B cell (primary cell): ENCODE measurements at regions of chr11 and their contacts with region 1.

Region 1: DNA sequence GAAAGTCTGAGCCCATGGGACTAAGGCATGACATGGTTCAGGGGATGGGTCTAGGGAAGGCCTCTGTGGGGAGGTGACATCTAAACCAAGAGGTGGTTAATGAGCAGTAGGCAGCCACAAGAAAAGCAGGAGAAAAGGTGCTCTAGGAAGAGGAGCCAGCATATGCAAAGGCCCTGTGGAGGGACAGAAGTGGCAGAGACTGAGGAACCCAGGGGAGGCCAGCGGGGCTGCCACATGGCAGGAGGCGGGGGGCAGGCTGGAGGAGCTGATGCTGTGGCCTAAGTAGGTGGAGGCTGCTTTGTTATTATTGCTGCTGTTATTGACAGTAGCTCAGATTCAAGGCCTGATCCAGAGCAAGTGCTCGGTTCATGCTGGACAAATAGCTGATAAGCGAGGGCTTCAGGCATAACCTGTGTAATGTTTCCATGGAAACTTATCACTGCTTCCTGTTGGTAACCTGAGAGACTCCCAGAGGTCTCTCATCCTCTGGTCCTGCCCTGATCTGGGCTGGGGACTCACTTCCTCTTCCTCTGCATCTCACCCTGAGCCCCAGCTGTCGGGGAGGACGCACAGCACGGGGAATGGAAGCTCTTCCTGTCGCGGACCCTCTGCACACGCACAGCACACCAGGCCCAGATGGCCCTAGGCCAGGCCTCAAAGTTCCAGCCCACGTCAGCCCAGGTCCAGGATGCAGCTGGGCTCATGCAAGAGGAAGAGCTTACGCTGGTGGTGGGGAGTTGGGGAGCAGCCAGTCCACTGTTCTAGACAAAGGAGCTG is 75.2 kb upstream of the TP53I11 start:
- DNase-seq: peak; percentile 82
- ATAC-seq: peak; percentile 50
- H3K4me3 ChIP-seq: no peak overlapping the region
- H3K4me3 Mint-ChIP-seq: peak overlapping the region; percentile 51
- H3K27ac ChIP-seq: peak overlapping the region; percentile 72 to 79
- H3K27ac Mint-ChIP-seq: peak overlapping the region; percentile 96
- H3K4me1 ChIP-seq: peaks cover 46 to 58% of the 10 kb centered on the region in 2 donors
- H3K4me1 Mint-ChIP-seq: peaks cover 66% of the 10 kb centered on the region
- H3K27me3 ChIP-seq: peaks cover 0 to 2% (median 0%) of the 10 kb centered on the region in 4 experiments
- H3K27me3 Mint-ChIP-seq: no peaks in the 10 kb centered on the region
- CTCF ChIP-seq: no peak

Region 2: DNA sequence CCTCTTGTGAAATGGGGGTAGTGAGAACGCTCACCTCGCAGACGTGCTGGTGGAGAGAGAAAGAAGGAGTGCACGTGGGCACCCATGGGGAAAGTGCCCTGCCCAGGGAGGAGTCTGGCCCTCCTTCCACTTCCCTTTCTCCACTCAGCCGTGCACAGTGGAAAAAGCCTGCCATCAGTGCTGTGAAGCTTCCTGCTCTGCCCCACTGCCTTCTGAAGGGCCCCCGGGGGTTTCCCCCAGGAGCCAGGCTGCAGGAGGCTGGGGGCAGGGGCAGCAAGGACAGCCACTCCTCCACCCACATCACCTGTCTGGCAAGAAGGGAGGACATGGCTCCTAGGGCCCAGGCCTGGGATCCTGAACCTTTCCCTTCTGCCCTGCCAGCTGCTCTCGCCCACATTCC is 82.8 kb before region 1 on chr11:
- CTCF ChIA-PET with region 1: interaction called, 13 read pairs
- POLR2A ChIA-PET with region 1: interaction called, 16 read pairs
- intact Hi-C with region 1: loop called (anchors 1 kb)
- DNase-seq: peak; percentile 89
- ATAC-seq: peak; percentile 93
- H3K4me3 ChIP-seq: peak overlapping the region in 4 of 5 experiments; percentile 10 to 53 (median 26)
- H3K4me3 Mint-ChIP-seq: peak overlapping the region; percentile 90
- H3K27ac ChIP-seq: peak overlapping the region; percentile 38 to 67
- H3K27ac Mint-ChIP-seq: peak overlapping the region; percentile 95
- H3K4me1 ChIP-seq: peaks cover 57 to 74% of the 10 kb centered on the region in 2 donors
- H3K4me1 Mint-ChIP-seq: peaks cover 92% of the 10 kb centered on the region
- H3K27me3 ChIP-seq: no peaks in the 10 kb centered on the region
- H3K27me3 Mint-ChIP-seq: no peaks in the 10 kb centered on the region
- CTCF ChIP-seq: no peak

Region 3: GRCh38 chr11:45079943-45080719 is 54.2 kb after region 1 on chr11:
- CTCF ChIA-PET with region 1: interaction called, 22 read pairs
- POLR2A ChIA-PET with region 1: interaction called, 10 read pairs
- intact Hi-C with region 1: loop called (anchors 1 kb)
- DNase-seq: peak; percentile 78
- ATAC-seq: peak; percentile 59
- H3K4me3 ChIP-seq: peak overlapping the region in 2 of 5 experiments; percentile 5 to 6
- H3K4me3 Mint-ChIP-seq: peak overlapping the region; percentile 71
- H3K27ac ChIP-seq: peak overlapping the region; percentile 65 to 73
- H3K27ac Mint-ChIP-seq: peak overlapping the region; percentile 93
- H3K4me1 ChIP-seq: peaks cover 52 to 65% of the 10 kb centered on the region in 2 donors
- H3K4me1 Mint-ChIP-seq: peaks cover 74% of the 10 kb centered on the region
- H3K27me3 ChIP-seq: no peaks in the 10 kb centered on the region
- H3K27me3 Mint-ChIP-seq: no peaks in the 10 kb centered on the region
- CTCF ChIP-seq: no peak

Region 4: DNA sequence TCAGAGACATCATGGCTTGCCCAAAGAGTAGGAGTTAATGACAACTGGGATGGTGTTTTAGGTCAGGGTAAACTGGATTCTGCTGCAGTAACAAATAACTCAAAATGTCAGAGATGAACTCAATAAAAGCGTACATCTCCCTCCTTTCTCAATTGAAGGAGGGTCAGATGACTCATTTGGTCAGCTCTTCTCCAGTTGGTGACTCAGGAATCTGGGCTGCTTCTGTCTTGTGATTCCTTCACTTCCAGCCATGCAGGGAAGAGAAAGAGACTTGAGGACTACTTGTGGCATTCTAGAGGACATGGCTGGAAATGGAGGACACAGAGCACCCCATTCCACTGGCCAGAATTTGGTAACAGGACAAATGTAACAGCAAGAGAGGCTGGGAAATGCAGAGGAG is 263.5 kb after region 1 on chr11:
- CTCF ChIA-PET with region 1: no interaction called
- POLR2A ChIA-PET with region 1: no interaction called
- intact Hi-C with region 1: no loop called
- DNase-seq: no peak
- ATAC-seq: no peak
- H3K4me3 ChIP-seq: no peak overlapping the region
- H3K4me3 Mint-ChIP-seq: no peak overlapping the region
- H3K27ac ChIP-seq: no peak overlapping the region
- H3K27ac Mint-ChIP-seq: no peak overlapping the region
- H3K4me1 ChIP-seq: no peaks in the 10 kb centered on the region
- H3K4me1 Mint-ChIP-seq: no peaks in the 10 kb centered on the region
- H3K27me3 ChIP-seq: peaks cover 0 to 59% (median 25%) of the 10 kb centered on the region in 4 experiments
- H3K27me3 Mint-ChIP-seq: peaks cover 73% of the 10 kb centered on the region
- CTCF ChIP-seq: no peak